ENCODE measurements at regions of chr22 and their contacts with region 1.

Region 1: DNA sequence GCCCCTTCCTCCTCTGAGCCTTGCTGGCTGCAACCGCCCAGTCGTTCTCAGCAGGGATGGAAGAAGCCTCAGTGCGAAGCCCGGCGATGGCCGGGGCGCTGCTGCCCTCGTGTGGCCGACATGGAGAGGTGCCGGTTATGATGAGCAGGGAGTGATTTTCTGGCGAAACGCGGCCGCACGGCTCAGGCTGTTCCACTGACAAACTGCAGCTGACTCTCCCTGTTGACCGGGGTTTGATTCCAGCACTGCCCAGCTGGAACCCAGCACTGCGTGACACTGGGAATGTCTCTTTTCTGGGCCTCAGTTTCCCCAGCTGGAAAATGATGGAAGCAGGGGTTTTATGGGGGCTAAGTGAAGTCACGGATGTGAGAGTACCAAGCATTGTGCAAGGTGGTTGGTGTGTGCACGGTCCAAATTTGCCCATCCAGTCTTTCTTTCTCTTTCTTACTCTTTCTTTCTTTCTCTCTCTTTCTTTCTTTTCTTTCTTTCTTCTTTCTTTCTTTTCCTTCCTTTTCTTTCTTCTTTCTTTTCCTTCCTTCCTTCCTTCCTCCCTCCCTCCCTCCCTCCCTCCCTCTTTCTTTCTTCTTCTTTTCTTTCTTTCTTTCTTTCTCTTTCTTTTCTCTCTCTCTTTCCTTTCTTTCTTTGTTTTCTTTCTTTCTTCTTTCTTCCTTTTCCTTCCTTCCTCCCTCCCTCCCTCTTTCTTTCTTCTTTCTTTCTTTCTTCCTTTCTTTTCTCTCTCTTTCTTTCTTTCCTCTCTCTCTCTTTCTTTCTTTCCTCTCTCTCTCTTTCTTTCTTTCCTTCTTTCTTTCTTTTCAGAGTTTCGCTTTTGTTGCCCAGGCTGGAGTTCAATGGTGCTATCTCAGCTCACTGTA is 25.8 kb upstream of the MPPED1 start:
- DNase-seq: peak; percentile 71 to 86
- ATAC-seq: peak; percentile 83 to 93 (median 86)
- H3K4me3 ChIP-seq: no peak overlapping the region
- H3K27ac ChIP-seq: no peak overlapping the region
- H3K4me1 ChIP-seq: no peaks in the 10 kb centered on the region
- H3K27me3 ChIP-seq: peaks cover 0 to 59% (median 5%) of the 10 kb centered on the region in 3 donors
- CTCF ChIP-seq: peak; percentile 85

Region 2: GRCh38 chr22:43230971-43231723 is 154.9 kb before region 1 on chr22:
- intact Hi-C with region 1: loop called (anchors 1 to 5 kb)
- DNase-seq: peak in 1 of 2 donors; percentile 66
- ATAC-seq: peak in 3 of 4 donors; percentile 36 to 61 (median 49)
- H3K4me3 ChIP-seq: no peak overlapping the region
- H3K27ac ChIP-seq: no peak overlapping the region
- H3K4me1 ChIP-seq: no peaks in the 10 kb centered on the region
- H3K27me3 ChIP-seq: peaks cover 0 to 16% (median 16%) of the 10 kb centered on the region in 3 donors
- CTCF ChIP-seq: peak; percentile 79

Region 3: GRCh38 chr22:43273902-43274484 is 112.0 kb before region 1 on chr22:
- intact Hi-C with region 1: loop called (anchors 2 to 5 kb)
- DNase-seq: no peak
- ATAC-seq: peak in 3 of 4 donors; percentile 54 to 69 (median 64)
- H3K4me3 ChIP-seq: no peak overlapping the region
- H3K27ac ChIP-seq: no peak overlapping the region
- H3K4me1 ChIP-seq: no peaks in the 10 kb centered on the region
- H3K27me3 ChIP-seq: peaks cover 0 to 9% (median 0%) of the 10 kb centered on the region in 3 donors
- CTCF ChIP-seq: peak; percentile 56

Region 4: DNA sequence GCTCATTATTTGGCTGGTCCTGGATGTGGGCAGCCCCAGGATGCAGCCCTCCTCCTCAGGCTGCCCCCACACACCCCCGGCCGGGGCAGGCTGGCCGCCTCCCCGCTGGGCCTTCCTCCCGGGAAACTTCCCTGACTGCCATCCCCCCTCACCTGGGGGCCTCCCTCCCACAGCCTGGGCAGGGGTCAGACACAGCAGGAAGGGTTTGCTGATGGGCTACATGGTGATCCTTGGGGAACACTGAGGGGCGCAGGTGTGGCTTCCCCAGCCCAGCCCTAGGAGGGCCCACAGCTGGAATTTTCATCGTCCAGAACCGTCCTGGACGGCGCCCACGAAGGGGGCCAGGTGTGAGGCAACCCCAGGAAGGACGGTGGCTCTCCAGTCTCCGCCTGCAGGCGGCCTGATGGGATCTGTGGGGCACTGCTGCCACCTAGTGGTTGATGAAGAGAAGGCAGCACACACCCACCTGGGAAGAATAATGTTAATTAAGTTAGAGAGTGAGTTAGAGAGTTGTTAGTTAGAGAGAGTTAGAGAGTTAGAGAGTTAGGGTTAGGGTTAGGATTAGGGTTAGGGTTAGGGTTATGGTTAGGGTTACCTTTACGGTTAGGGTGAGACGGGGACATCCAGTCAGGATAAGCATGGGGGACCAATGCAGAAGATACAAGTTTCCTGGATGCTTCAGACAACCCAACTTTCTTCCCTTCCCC is 1240.1 kb after region 1 on chr22:
- intact Hi-C with region 1: loop called (anchors 1 to 5 kb)
- DNase-seq: peak; percentile 68 to 80
- ATAC-seq: peak; percentile 81 to 94 (median 87)
- H3K4me3 ChIP-seq: no peak overlapping the region
- H3K27ac ChIP-seq: no peak overlapping the region
- H3K4me1 ChIP-seq: no peaks in the 10 kb centered on the region
- H3K27me3 ChIP-seq: peaks cover 0 to 30% (median 7%) of the 10 kb centered on the region in 3 donors
- CTCF ChIP-seq: peak; percentile 97

Measured in psoas muscle (tissue), 8 donors.